ENCODE measurements at regions of chr4 and their contacts with region 1.

Region 1: DNA sequence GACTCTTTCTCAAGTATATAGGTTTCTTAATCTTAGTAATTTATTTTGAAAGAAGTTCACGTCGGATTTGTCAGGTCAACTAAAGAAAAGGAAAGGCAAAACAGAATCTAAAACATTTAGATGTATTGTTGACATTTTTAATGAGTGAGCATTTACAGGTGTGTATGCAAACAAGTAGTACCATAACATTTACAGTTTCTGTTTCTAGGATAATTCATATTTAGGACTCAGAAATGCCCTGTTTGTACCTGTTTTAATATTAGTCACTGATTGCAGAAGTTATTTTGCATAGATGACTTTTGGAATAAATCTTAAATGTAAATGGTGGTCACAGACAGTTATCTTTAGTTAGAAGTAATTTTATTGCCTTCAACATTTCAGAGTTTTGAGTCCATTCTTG is 151.3 kb upstream of the NUDT6 start:
- DNase-seq: no peak
- ATAC-seq: no peak

Region 2: GRCh38 chr4:123102897-123103471 is 29.3 kb after region 1 on chr4:
- intact Hi-C with region 1: no loop called
- DNase-seq: no peak
- ATAC-seq: peak; percentile 73

Region 3: DNA sequence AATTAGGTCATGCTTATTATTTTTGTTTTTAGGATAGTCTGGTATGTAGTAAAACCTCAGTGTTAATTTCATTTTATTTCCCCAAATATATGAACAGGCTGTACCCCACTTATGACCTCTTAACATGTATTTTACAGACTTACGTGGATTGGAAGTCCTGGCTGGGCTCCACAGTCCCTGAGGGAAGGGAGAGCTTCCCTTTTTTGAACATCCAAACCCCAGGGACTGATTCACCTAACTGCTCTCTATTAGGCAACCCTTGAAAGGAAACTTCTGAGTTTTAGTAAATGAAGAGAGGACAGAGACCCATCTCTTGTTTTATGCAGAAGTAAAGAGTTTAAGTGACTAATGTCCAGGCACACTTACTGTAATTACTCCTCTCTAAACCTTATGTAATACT is 89.9 kb after region 1 on chr4:
- intact Hi-C with region 1: loop called (anchors 5 kb)
- DNase-seq: no peak
- ATAC-seq: no peak

Measured in sciatic nerve (tissue), 2 donors.